Aorta (tissue), 5 donors: ENCODE measurements at regions of chr17 and their contacts with region 1.

Region 1: GRCh38 chr17:82351716-82352488 is 7.1 kb upstream of the TEX19 start:
- DNase-seq: peak; percentile 88 to 93
- ATAC-seq: peak; percentile 84
- H3K4me3 ChIP-seq: no peak overlapping the region
- H3K27ac ChIP-seq: no peak overlapping the region
- H3K4me1 ChIP-seq: no peaks in the 10 kb centered on the region
- H3K27me3 ChIP-seq: no peaks in the 10 kb centered on the region

Region 2: DNA sequence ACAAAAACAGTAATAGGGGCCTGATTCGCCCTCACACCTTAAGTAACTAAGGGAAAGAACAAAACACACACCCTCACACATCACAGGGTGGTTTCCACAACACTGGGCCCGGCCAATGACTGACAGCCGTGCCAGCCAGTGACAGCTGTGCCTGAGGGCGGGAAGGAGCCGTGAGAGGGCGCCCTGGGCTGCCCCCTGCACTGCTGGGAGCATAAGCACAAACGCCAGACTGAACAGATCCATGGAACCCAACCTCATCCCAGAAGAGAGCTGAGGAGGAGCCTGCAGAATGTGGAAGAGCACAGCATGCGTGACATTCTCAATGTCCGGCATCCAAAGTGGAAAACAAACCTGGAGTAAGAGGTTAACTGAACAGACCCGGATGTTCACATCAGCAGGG is 94.4 kb before region 1 on chr17:
- intact Hi-C with region 1: no loop called
- DNase-seq: peak in 1 of 2 donors; percentile 78
- ATAC-seq: no peak
- H3K4me3 ChIP-seq: no peak overlapping the region
- H3K27ac ChIP-seq: no peak overlapping the region
- H3K4me1 ChIP-seq: no peaks in the 10 kb centered on the region
- H3K27me3 ChIP-seq: no peaks in the 10 kb centered on the region

Region 3: GRCh38 chr17:82418001-82418986 is 66.4 kb after region 1 on chr17 and contains the starts of genes HEXD and OGFOD3:
- intact Hi-C with region 1: loop called in 1 of 2 experiments (anchors 1 kb)
- DNase-seq: peak; percentile 86 to 93
- ATAC-seq: peak; percentile 93
- H3K4me3 ChIP-seq: peak within 1 kb of the TSS; percentile 59 to 85
- H3K27ac ChIP-seq: peak within 1 kb of the TSS in 1 of 2 donors; percentile 74
- H3K4me1 ChIP-seq: no peaks in the 10 kb centered on the region
- H3K27me3 ChIP-seq: no peaks in the 10 kb centered on the region
- total RNA-seq, gene HEXD: 14.8 to 34.7 TPM
- total RNA-seq, gene OGFOD3: 17.5 to 22.2 TPM

Region 4: DNA sequence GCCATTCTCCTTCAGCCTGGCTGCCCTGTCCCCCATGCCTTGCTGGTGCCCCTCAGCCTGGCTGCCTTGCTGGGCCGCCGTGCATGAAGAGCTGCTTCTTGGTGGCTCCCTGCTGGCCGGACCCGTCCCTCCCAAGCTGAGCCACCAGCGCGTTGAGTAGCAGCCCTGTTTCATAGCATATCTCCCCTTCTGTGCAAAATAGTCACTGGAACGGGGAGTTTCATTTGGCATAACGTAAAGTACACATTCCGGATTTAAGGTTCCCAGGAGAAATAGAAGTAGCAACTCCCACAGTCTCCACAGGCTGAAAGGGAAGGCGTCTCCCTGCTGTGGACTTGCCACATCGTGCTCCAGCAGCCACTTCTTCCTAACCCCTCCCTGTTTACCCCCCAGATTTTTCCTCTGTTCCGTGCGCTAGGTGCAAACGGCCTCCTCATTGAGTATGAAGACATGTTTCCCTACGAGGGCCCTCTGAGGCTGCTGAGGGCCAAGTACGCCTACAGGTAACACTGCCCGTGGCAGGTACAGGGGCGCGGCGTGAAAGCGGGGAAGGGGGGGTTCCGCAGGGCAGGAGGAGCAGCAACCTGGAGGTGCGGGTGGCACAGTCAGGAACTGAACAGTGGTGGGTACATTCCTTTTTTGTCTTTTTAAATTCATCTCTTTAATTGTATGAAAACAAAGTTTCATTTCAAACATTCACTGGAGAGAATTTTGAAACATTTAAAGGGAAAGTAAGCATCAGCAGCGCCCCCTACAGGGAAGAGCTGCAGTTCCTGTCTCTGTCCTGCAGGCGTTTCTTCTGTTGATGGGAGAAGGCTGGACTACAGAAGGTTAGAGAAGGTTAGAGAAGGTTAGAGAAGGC is 72.3 kb after region 1 on chr17:
- intact Hi-C with region 1: loop called in 1 of 2 experiments (anchors 1 kb)
- DNase-seq: peak in 1 of 2 donors; percentile 62
- ATAC-seq: peak; percentile 70
- H3K4me3 ChIP-seq: no peak overlapping the region
- H3K27ac ChIP-seq: no peak overlapping the region
- H3K4me1 ChIP-seq: no peaks in the 10 kb centered on the region
- H3K27me3 ChIP-seq: no peaks in the 10 kb centered on the region

Region 5: GRCh38 chr17:82494236-82495055 is 142.5 kb after region 1 on chr17:
- intact Hi-C with region 1: loop called in 1 of 2 experiments (anchors 5 kb)
- DNase-seq: peak; percentile 94 to 95
- ATAC-seq: peak; percentile 90
- H3K4me3 ChIP-seq: no peak overlapping the region
- H3K27ac ChIP-seq: peak overlapping the region in 1 of 2 donors; percentile 12
- H3K4me1 ChIP-seq: no peaks in the 10 kb centered on the region
- H3K27me3 ChIP-seq: no peaks in the 10 kb centered on the region

Region 6: DNA sequence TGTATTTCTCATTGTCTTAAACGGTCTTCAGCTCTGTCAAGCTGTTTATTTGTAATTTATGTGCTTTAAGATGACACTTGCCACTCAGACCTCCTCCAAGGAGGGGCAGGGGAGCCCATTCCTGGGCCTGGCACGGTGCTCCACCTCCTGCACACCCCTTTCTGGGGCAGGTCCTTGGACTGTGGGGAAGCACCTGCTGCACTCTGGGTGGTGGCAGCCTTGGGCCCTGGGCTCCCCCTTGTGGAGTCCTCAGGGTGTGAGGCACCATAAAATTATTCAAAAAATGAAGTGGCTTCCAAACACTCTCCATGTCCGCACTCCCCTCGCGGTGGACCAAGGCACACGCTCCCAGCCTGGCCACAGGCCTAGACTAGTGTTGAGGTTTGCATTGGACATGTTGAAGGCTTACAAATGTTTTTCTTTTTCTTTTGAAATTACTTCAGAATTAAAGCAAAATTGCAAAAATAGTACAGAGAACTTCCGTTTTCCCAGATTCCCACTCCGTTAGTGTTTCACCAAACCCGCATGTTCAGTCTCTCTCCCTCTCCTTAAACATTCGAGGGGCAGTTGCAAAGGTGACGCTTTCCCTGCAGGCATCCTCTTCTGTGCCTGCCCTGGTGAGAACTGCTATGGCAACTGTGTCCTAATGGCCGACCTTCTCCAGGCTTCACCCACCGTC is 200.0 kb after region 1 on chr17:
- intact Hi-C with region 1: loop called (anchors 5 to 10 kb)
- DNase-seq: peak; percentile 85 to 91
- ATAC-seq: peak; percentile 83
- H3K4me3 ChIP-seq: no peak overlapping the region
- H3K27ac ChIP-seq: peak overlapping the region; percentile 53 to 72
- H3K4me1 ChIP-seq: peaks cover 0 to 2% of the 10 kb centered on the region in 2 donors
- H3K27me3 ChIP-seq: no peaks in the 10 kb centered on the region

Region 7: GRCh38 chr17:82767041-82767754 is 415.3 kb after region 1 on chr17:
- intact Hi-C with region 1: loop called in 1 of 2 experiments (anchors 10 kb)
- DNase-seq: peak in 1 of 2 donors; percentile 45
- ATAC-seq: no peak
- H3K4me3 ChIP-seq: no peak overlapping the region
- H3K27ac ChIP-seq: no peak overlapping the region
- H3K4me1 ChIP-seq: no peaks in the 10 kb centered on the region
- H3K27me3 ChIP-seq: no peaks in the 10 kb centered on the region

Region 8: DNA sequence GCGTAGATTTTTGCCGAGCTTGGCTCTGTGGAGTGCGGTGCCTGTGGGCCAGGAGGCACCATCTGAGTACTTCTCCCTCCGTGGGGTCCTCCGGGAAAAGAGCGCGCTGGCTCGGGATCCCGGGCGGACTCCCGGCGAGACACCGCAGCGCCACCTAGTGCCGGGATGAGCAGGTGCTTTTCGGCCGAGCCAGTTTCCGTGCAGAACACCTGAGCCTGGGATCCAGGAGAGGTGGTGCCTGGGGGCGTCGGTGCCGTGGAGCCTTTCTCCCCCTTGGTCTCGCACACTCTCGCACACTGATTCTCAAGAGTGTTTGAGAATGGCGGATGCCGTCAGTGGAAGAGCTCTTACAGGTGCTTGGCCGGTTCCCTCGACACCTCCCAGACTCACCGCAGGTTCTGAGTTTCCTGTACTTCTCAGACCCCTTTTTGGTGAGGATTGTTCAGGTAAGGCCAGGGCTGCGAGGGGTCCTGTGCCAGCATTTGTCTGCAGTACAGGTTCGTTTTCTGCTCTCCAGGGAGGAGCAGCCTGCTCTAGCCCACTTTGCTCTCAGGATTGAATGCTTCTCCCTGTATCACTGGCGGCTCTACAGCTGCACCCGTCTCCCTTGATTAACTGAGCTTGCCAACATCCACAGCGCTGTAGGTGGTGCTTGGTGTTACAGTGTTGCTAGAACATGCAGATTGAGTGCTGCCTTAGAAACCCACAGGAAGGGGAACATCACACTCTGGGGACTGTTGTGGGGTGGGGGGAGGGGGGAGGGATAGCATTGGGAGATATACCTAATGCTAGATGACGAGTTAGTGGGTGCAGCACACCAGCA is 423.3 kb after region 1 on chr17:
- intact Hi-C with region 1: loop called in 1 of 2 experiments (anchors 5 kb)
- DNase-seq: peak; percentile 71 to 89
- ATAC-seq: peak; percentile 79
- H3K4me3 ChIP-seq: no peak overlapping the region
- H3K27ac ChIP-seq: no peak overlapping the region
- H3K4me1 ChIP-seq: no peaks in the 10 kb centered on the region
- H3K27me3 ChIP-seq: no peaks in the 10 kb centered on the region